ENCODE measurements at regions of chr11 and their contacts with region 1.

Region 1: DNA sequence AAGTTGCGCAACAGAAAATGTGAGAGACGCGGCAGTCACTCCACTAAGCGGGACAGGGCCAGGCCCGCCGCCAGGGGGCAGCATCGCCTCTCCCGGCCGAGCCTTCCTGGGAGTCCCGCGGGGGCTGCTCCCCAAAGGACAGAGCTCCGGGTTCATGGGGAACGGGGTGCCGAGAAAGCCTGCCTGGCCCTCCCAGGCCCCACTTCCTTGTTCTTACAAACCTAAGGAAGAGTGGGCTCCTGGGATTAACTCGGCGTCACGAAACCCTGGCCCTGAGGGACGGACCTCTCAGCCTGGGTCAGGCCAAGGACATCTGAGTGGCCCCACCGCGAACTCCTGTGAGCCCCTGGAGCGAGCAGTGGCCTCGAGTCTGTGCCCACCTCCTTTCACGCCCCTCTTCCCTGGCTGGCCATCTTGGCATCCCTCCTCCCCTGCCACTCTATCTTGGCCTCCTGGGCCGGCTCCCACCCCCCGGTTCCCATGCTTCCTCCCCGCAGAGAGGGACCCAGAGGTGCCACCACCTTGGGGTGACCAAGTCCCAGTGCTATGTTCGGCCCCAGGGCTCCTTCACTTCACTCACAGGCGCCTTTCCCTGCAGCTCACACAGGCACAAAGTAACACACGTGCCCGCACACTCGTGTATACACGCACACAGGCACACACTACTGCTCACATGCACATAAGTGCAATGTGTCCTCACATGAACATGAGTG is 99.9 kb upstream of the FGF3 start:
- DNase-seq: peak in 1 of 2 donors; percentile 93
- H3K4me3 ChIP-seq: no peak overlapping the region
- CTCF ChIP-seq: peak in 1 of 3 donors; percentile 19
- POLR2A ChIP-seq: no peak

Region 2: DNA sequence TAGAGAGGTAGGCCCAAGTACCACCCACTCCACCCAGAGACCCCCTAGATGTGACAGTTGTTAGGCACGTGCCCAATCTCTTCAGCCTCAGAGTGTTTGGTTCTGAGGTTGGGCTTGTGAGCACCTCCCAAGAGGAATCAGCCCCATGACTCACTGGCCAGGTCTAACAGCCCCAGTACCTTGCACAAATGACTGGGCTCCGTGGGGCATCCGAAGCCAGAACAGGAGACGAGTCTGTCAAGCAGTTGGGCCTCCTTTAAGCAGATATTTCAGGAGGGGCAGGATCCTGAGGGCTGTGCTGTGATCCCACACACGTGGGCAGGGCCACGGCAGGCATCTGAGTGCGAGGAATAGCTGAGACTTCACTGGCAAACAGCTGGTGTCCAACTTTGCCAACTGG is 186.2 kb before region 1 on chr11:
- intact Hi-C with region 1: no loop called
- DNase-seq: no peak
- H3K4me3 ChIP-seq: no peak overlapping the region
- CTCF ChIP-seq: no peak
- POLR2A ChIP-seq: no peak

Region 3: DNA sequence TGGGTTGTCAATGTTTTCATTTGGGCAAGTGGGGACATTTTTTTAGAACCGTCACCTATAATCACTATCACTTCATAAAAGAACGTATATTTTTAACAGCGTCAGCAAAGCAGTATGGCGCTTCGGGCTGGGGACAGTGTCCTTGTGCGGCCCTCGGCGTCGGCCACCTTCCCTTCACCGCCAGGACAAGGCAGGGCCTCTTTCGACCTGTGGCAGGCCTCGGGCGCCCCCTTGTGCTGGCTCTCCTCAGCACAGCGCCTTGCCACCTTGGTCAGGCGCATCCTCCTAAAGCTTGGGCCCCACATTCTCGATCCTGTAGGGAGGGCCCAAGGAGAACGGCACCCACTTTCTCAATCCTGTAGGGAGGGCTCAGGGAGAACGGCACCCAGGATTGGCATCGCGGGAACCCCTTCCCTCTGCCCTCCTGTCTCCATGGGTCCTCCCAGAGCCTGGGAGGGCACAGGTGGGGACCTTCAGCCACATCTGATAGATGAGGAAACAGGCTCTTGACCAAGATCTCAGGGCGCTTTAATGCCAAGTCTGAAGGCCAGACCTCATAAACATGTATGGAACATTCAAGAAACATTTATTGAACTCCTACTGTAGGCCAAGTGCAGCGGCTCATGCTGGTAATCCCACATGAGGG is 272.5 kb after region 1 on chr11:
- intact Hi-C with region 1: loop called (anchors 5 kb)
- DNase-seq: no peak
- H3K4me3 ChIP-seq: no peak overlapping the region
- CTCF ChIP-seq: peak in 1 of 3 donors; percentile 51
- POLR2A ChIP-seq: no peak

Measured in lower leg skin (tissue), 4 donors.